ENCODE measurements at regions of chr1 and their contacts with region 1.

Region 1: GRCh38 chr1:187306710-187307415 is 478.1 kb downstream of the PLA2G4A start:
- DNase-seq: no peak
- ATAC-seq: no peak
- H3K4me3 Mint-ChIP-seq: no peak overlapping the region
- H3K27ac Mint-ChIP-seq: no peak overlapping the region
- H3K4me1 Mint-ChIP-seq: no peaks in the 10 kb centered on the region
- H3K27me3 Mint-ChIP-seq: no peaks in the 10 kb centered on the region

Region 2: DNA sequence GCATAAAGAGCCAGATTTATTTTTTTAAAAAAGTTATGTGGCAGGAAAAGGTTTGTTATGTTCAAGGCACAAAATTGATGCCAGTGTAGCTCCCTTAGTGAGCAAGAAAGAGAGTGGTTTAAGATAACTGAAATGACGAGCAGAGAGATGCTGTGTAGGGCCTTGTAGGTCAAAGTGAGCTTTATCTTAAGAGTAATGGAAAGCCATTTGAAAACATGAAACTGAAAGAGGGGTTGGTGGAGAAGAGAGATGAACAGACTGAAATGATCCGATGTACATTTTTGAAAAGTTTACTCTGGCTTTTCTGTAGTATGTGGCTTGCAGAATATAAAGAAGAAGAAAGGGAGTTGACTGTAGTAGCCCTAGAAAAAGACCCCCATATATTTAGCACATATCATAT is 94.5 kb before region 1 on chr1:
- CTCF ChIA-PET with region 1: no interaction called
- POLR2A ChIA-PET with region 1: no interaction called
- intact Hi-C with region 1: no loop called
- DNase-seq: no peak
- ATAC-seq: no peak
- H3K4me3 Mint-ChIP-seq: no peak overlapping the region
- H3K27ac Mint-ChIP-seq: no peak overlapping the region
- H3K4me1 Mint-ChIP-seq: no peaks in the 10 kb centered on the region
- H3K27me3 Mint-ChIP-seq: no peaks in the 10 kb centered on the region

Region 3: DNA sequence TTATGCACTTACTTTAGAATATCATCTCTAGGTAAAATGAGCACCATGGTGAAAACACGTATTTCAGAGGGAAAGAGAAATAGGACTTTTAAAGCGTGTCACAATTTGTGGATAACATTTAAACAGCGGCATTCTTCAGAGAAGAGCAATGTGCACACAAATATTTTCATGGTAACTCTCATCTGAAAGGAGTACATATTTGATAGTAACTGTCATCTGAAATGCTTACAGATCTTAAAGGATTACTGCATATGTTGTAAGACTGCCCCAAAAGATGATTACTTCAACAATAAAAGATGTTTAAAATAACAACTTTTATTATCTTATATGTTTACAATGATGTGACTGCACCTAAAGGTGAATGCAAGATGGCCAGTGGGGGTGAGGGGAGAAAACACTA is 69.3 kb before region 1 on chr1:
- CTCF ChIA-PET with region 1: no interaction called
- POLR2A ChIA-PET with region 1: no interaction called
- intact Hi-C with region 1: no loop called
- DNase-seq: no peak
- ATAC-seq: no peak
- H3K4me3 Mint-ChIP-seq: no peak overlapping the region
- H3K27ac Mint-ChIP-seq: no peak overlapping the region
- H3K4me1 Mint-ChIP-seq: no peaks in the 10 kb centered on the region
- H3K27me3 Mint-ChIP-seq: no peaks in the 10 kb centered on the region

Region 4: GRCh38 chr1:187294421-187295201 is 12.3 kb before region 1 on chr1:
- CTCF ChIA-PET with region 1: no interaction called
- POLR2A ChIA-PET with region 1: no interaction called
- intact Hi-C with region 1: loop called in 1 of 2 experiments (anchors 2 kb)
- DNase-seq: no peak
- ATAC-seq: no peak
- H3K4me3 Mint-ChIP-seq: no peak overlapping the region
- H3K27ac Mint-ChIP-seq: no peak overlapping the region
- H3K4me1 Mint-ChIP-seq: no peaks in the 10 kb centered on the region
- H3K27me3 Mint-ChIP-seq: no peaks in the 10 kb centered on the region

Region 5: DNA sequence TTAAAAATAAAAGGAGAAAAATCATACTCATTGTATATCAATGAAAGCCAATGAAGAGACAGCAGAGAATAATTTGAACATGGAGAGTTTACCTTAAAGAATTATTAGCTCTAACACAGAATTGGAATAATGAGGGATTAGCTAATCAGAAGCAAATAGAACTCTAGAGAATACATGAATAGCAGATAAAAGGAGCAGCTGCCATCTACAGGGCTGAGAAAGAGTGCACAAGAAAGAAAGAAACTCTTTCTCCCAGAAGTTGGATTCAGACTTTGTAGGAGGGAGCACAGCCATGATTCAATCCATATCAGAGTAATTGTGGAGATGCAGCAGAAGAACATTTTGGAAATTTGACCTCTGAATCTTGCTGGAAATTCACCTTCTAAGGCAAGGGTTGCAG is 693.1 kb after region 1 on chr1:
- CTCF ChIA-PET with region 1: no interaction called
- POLR2A ChIA-PET with region 1: no interaction called
- intact Hi-C with region 1: no loop called
- DNase-seq: no peak
- ATAC-seq: no peak
- H3K4me3 Mint-ChIP-seq: no peak overlapping the region
- H3K27ac Mint-ChIP-seq: no peak overlapping the region
- H3K4me1 Mint-ChIP-seq: no peaks in the 10 kb centered on the region
- H3K27me3 Mint-ChIP-seq: no peaks in the 10 kb centered on the region

Measured in activated CD4-positive, alpha-beta T cell treated with anti-CD3 and anti-CD28 coated beads for 36 hours (primary cell).